ENCODE measurements at regions of chr2 and their contacts with region 1.

Region 1: DNA sequence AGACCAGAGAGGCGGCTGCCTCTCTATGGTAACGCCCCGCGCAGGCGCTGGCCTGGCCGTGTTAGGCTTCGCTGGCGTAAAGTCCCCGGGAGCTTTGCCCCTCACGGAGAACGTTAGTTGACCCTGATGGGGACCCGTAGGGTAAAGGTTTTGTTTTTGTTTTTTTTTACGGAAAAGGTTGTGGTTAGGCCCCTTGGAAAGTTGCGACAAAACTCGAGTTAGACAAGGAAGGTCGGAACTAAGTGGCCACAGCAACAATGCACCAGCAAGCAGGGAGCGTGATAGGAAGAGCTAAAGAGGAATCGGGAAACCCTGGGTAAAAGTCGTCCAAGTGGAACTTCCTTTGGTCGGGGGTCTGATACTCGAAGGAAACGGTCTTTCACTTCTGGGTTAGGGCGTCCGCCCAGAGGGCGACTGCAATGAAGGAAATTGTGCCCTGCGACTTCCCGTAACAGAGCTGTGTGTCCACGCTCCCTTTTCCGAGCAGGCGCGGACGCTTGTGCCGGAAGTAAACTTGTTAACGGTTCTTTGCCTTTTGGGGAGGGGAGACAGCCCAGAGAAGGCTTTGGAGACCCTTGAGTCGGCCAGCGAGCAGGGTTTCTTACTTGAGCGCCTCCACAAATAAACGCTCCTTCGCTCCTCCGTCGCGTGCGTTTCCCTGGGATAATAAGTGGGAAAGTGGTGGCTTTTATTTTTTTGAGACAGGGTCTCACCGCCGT is 493 bp upstream of the CLASP1 start:
- DNase-seq: peak; percentile 97
- H3K4me3 Mint-ChIP-seq: peak overlapping the region; percentile 88
- H3K27ac Mint-ChIP-seq: peak overlapping the region; percentile 100
- H3K4me1 Mint-ChIP-seq: peaks cover 68% of the 10 kb centered on the region
- H3K27me3 Mint-ChIP-seq: no peaks in the 10 kb centered on the region

Region 2: GRCh38 chr2:121605820-121606733 is 43.7 kb before region 1 on chr2:
- CTCF ChIA-PET with region 1: no interaction called
- POLR2A ChIA-PET with region 1: no interaction called
- DNase-seq: no peak
- H3K4me3 Mint-ChIP-seq: no peak overlapping the region
- H3K27ac Mint-ChIP-seq: no peak overlapping the region
- H3K4me1 Mint-ChIP-seq: peaks cover 15% of the 10 kb centered on the region
- H3K27me3 Mint-ChIP-seq: no peaks in the 10 kb centered on the region

Region 3: GRCh38 chr2:121634354-121635307 is 15.1 kb before region 1 on chr2:
- CTCF ChIA-PET with region 1: no interaction called
- POLR2A ChIA-PET with region 1: interaction called, 15 read pairs
- DNase-seq: no peak
- H3K4me3 Mint-ChIP-seq: no peak overlapping the region
- H3K27ac Mint-ChIP-seq: peak overlapping the region; percentile 67
- H3K4me1 Mint-ChIP-seq: peaks cover 30% of the 10 kb centered on the region
- H3K27me3 Mint-ChIP-seq: no peaks in the 10 kb centered on the region

Region 4: DNA sequence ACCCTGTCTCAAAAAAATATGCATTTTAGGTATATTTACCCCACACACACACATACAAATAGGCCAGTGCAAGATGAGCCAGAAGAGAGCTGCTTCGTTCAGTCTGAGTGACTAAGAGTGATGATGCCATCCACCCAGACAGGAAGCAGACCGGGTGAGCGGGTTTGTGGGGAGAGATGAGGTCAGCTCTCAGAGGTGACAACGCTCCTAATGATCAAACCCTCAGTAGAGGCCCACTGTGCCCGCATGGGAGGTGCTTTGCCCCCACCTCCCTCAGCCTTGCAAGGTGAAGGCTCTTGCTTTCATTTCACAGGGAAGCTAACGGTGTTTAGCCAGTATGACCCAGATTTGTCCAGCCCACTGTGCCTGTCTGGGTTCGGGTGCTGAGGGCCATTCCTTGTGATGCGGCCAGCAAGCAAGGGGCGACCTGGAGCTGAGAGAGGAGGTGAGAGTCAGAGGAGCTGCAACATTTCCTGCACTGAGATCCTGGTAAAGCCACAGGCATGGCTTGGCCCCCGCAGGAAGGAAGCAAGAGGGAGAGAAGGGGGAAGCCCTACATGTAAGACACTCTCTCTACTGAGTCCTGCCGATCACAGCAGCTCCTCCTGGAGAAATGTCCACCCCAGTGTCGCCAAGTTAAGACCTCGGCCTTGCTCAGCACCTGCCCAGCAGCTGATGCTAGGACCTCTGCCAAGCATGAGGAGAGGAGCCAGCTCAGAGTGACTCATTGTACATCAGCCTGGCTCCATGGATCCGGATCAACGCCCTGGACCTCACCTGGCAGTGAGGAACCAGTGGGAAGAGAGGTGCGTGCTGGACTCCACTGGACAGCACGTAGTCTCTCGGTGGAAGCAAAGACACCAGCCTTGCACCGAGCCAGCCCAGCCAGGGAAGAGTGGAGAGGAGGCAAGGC is 49.9 kb after region 1 on chr2:
- CTCF ChIA-PET with region 1: interaction called, 11 read pairs
- POLR2A ChIA-PET with region 1: interaction called, 185 read pairs
- DNase-seq: peak; percentile 95
- H3K4me3 Mint-ChIP-seq: peak overlapping the region; percentile 79
- H3K27ac Mint-ChIP-seq: peak overlapping the region; percentile 97
- H3K4me1 Mint-ChIP-seq: peaks cover 50% of the 10 kb centered on the region
- H3K27me3 Mint-ChIP-seq: no peaks in the 10 kb centered on the region

Region 5: DNA sequence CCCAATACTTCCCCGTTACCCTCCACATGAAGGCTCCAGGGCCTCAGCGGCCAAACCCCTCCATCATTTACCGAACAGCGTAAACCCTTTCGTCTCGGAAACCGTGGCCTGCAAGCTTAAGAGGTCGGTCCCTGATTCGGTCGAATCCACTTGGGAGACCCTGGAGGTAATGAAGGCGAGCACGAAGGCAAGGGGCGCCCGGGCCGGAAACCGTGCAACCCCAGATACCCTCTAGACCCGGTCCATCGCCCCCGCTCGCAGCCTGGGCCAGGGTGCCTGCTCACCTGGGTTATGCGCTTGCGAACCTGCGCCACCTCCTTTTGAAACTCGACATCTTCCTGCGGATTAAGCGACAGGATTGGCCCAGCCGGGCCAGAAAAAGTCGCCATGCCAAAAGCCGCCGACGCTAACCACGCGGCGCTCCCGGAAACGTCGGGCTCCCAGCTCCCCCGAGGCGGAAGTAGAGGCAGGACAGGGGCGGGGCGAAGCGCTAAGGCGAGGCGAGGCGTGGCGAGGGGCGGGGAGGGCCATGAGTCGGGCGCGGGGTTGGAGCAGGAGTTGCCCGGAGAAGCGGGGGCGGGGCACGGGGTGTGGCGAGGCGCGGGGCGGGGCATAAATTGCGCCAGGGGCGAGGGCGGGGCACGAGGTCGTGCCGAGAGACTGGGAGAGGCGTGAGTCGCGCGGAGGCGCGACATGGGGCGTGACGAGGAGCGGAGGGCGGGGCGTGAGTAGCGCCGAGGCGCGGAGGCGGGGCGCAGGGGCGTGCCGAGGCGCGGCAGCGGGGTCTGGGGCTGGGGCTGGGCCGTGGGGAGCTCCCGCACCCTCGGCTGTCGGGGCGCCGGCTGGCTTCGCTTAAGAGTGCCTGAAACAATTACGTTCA is 86.9 kb after region 1 on chr2 and contains the start of gene NIFK:
- CTCF ChIA-PET with region 1: interaction called, 4 read pairs
- POLR2A ChIA-PET with region 1: interaction called, 34 read pairs
- DNase-seq: peak; percentile 100
- H3K4me3 Mint-ChIP-seq: peak within 1 kb of the TSS; percentile 89
- H3K27ac Mint-ChIP-seq: peak within 1 kb of the TSS; percentile 88
- H3K4me1 Mint-ChIP-seq: peaks cover 44% of the 10 kb centered on the region
- H3K27me3 Mint-ChIP-seq: peaks cover 2% of the 10 kb centered on the region
- total RNA-seq, gene NIFK: 63.4 to 67.2 TPM

Measured in activated CD4-positive, alpha-beta memory T cell treated with anti-CD3 and anti-CD28 coated beads, Interleukin-2, amount 10 ng/mL, durations not matched to agents 7 days and 5 days (primary cell).